AG04449 (cell line): ENCODE measurements at regions of chr18 and their contacts with region 1.

Region 1: GRCh38 chr18:76982841-76983587 is 149.6 kb downstream of the MBP start:
- DNase-seq: no peak
- H3K4me3 ChIP-seq: no peak overlapping the region
- CTCF ChIP-seq: peak; percentile 93

Region 2: GRCh38 chr18:76922107-76922506 is 60.9 kb before region 1 on chr18:
- CTCF ChIA-PET with region 1: interaction called, 44 read pairs
- POLR2A ChIA-PET with region 1: no interaction called
- DNase-seq: no peak
- H3K4me3 ChIP-seq: no peak overlapping the region
- CTCF ChIP-seq: peak; percentile 67

Region 3: GRCh38 chr18:76937597-76937996 is 45.4 kb before region 1 on chr18:
- CTCF ChIA-PET with region 1: interaction called, 12 read pairs
- POLR2A ChIA-PET with region 1: no interaction called
- DNase-seq: peak; percentile 7
- H3K4me3 ChIP-seq: no peak overlapping the region
- CTCF ChIP-seq: peak; percentile 23

Region 4: DNA sequence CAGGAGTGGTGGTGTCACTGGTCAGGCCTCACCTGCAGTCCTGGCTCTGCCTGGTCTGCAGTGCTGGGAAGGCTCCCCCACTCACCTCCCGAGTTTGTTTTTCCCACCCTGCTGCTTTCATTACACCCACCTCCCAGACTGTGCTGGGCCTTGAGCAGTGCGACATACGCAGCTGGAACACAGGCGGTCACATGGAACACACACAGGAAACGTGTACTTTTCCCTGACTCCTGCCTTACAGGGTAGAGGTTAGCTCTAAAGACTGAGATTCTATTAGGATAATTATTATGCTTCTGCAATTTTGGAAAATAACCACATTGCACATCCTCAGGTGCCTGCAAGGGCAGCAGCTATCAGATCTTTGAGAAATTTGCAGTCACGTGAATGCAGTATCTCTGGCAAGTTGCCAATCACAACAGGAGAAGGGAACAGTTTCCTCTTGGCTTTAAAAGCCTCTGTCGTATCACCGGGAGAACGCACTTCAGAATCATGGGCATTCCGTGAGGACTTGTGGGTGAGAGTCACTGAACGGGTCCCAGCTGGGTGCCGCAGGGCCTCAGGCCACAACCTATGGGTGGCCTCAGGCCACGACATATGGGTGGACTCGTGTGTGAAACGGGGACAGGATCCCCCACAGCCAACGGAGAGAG is 24.2 kb before region 1 on chr18:
- CTCF ChIA-PET with region 1: interaction called, 93 read pairs
- POLR2A ChIA-PET with region 1: no interaction called
- DNase-seq: no peak
- H3K4me3 ChIP-seq: no peak overlapping the region
- CTCF ChIP-seq: no peak

Region 5: GRCh38 chr18:76963936-76964335 is 19.1 kb before region 1 on chr18:
- CTCF ChIA-PET with region 1: interaction called, 93 read pairs
- POLR2A ChIA-PET with region 1: no interaction called
- DNase-seq: no peak
- H3K4me3 ChIP-seq: no peak overlapping the region
- CTCF ChIP-seq: no peak

Region 6: DNA sequence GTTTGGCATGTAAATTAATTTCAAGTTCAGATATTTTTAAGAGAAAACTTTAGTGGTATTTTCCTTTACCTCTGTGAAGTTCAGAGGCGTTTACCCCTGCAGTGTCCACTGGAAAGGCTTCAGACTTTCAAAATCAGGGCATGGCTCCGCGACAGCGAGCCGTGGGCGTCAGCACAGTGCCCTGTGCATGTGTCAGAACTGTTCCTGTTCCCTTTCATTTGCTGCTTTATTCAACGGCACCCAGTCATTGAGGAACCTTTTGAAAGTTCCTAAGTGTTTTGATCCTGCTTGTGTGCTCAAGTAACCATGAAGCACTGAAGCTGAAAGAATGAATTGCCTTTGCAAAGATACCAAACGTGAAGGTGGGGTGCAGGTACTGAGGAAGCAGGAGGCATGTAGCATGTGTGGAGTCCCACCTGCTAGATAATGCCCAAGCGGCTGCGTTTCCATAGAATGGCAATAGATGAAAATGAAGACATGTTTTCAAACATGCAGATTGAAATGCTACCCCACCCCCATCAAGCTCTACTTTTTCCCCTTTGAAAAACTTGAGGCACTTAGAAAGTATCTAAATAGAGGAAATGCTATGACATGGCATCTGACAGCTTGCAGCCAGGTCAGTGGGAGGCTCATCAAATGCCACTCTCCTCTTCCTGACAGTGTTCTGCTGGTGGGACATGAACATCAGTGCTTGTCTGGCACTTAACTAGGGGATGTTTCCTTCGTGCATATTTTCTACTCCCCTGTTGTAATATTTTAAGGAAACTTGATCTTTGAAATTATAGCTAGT is 12.0 kb before region 1 on chr18:
- CTCF ChIA-PET with region 1: interaction called, 93 read pairs
- POLR2A ChIA-PET with region 1: no interaction called
- DNase-seq: no peak
- H3K4me3 ChIP-seq: no peak overlapping the region
- CTCF ChIP-seq: no peak

Region 7: GRCh38 chr18:77114415-77115191 is 131.6 kb after region 1 on chr18:
- CTCF ChIA-PET with region 1: no interaction called
- POLR2A ChIA-PET with region 1: no interaction called
- DNase-seq: peak; percentile 65
- H3K4me3 ChIP-seq: no peak overlapping the region
- CTCF ChIP-seq: no peak

Region 8: GRCh38 chr18:77207540-77207939 is 224.5 kb after region 1 on chr18:
- CTCF ChIA-PET with region 1: interaction called, 79 read pairs
- POLR2A ChIA-PET with region 1: no interaction called
- DNase-seq: peak; percentile 24
- H3K4me3 ChIP-seq: no peak overlapping the region
- CTCF ChIP-seq: peak; percentile 82